Activated naive CD4-positive, alpha-beta T cell treated with anti-CD3 and anti-CD28 coated beads for 36 hours (primary cell): ENCODE measurements at regions of chr2 and their contacts with region 1.

Region 1: DNA sequence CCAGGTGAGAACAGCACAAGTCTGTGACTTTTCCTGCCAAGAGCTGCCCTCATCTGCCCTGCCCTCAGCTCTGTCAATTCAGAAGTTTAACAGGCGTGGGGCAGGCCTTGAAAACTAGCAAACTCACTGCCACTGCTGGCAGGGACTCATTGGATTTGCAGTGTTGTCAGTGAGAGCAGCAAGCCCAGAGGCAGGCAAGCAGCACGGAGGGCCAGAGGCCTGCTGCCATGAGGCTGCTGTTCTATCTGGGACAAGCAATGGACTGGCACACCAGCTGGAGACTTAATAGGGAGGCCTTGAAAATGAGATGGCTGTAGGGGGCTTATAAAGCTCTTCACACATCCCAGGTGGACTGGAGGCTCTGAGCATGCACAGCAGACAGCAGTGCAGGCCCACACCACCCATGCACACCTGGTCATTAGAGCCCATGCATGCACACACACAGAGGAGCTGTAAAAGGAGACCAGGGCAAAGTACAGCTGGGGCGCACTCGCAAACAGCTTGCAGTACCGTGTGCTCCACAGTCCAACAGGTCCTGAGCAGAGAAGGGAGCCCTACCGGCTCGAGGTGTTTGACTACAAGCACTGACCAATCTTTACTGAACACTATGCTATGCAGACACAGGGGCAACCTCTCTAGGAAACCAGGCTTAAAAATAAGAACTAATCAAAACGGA is 28.7 kb downstream of the MGAT4A start:
- DNase-seq: peak; percentile 26
- H3K4me3 Mint-ChIP-seq: no peak overlapping the region
- H3K27ac Mint-ChIP-seq: peak overlapping the region; percentile 86
- H3K4me1 Mint-ChIP-seq: peaks cover 72% of the 10 kb centered on the region
- H3K27me3 Mint-ChIP-seq: no peaks in the 10 kb centered on the region

Region 2: DNA sequence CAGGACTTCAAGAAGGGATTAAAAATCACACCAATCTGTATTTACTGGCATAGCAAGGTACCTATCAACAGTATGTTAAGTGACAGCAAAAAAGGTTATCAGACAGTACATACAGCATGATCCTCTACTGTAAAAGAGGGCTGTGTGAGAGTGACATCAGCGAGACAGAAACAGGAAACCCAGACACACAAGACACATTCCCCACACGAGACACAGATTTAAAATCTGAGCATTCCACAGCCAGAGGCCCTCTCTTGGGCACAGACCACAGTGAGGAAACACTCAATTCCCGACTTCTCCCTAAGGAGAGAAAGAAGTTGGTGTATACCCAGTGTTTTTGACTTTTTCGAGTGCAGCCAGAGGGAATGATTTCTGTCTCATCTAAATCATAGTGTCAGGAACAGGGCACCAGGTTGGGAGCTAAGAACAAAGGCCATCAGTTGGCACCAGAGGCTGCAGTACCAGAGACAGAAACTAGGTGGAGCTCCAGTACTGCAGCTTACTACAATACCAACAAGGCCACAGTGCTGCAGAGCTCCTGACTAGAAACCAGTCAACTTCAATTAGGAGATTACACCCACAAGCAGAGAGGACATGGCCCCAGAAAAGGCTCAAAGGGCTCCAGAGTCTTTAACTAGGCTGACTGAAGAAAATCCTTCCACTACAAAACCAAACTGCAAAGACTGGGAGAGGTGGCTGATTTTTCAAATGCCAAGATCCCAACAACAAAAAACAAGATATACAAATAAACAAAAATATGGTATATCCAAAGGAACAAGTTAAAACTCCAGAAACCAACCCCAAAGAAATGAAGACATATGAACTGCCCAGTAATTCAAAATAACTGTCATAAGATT is 52.9 kb before region 1 on chr2:
- CTCF ChIA-PET with region 1: interaction called, 7 read pairs
- intact Hi-C with region 1: loop called (anchors 1 kb)
- DNase-seq: peak; percentile 92
- H3K4me3 Mint-ChIP-seq: no peak overlapping the region
- H3K27ac Mint-ChIP-seq: peak overlapping the region; percentile 83
- H3K4me1 Mint-ChIP-seq: peaks cover 56% of the 10 kb centered on the region
- H3K27me3 Mint-ChIP-seq: no peaks in the 10 kb centered on the region

Region 3: DNA sequence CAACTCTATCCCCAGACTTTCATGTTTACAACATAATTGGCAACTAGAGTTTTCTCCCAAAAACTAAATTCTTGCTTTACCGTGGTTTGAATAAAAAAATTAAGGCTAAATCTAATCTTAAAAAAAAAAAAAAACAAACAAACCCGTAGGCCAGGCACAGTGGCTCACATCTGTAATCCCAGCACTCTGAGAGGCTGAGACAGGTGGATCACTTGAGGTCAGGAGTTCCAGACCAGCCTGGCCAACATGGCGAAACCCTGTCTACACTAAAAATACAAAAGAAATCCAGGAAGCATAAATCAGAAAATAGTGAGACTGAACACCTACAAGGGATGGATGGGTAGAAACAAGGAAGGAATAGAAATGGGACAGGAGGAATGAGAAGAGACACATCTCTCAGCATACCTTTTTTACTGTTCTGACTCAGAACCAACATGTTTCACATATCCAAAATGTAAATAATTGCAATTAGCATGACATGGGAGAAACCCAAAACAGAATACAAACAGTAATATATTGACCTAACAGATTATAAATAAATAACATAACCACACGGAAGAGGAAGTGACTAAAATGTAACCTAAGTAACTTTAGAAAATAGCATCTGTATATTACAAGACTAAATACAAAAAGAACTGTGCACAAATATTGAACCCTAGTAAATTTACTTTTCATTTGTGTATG is 11.2 kb after region 1 on chr2:
- CTCF ChIA-PET with region 1: interaction called, 5 read pairs
- intact Hi-C with region 1: loop called (anchors 1 kb)
- DNase-seq: no peak
- H3K4me3 Mint-ChIP-seq: no peak overlapping the region
- H3K27ac Mint-ChIP-seq: peak overlapping the region; percentile 12
- H3K4me1 Mint-ChIP-seq: peaks cover 94% of the 10 kb centered on the region
- H3K27me3 Mint-ChIP-seq: no peaks in the 10 kb centered on the region

Region 4: GRCh38 chr2:99217929-99218501 is 515.8 kb after region 1 on chr2:
- CTCF ChIA-PET with region 1: no interaction called
- intact Hi-C with region 1: no loop called
- DNase-seq: no peak
- H3K4me3 Mint-ChIP-seq: no peak overlapping the region
- H3K27ac Mint-ChIP-seq: no peak overlapping the region
- H3K4me1 Mint-ChIP-seq: no peaks in the 10 kb centered on the region
- H3K27me3 Mint-ChIP-seq: no peaks in the 10 kb centered on the region